Ovary (tissue), 10 donors: ENCODE measurements at regions of chr9 and their contacts with region 1.

Region 1: DNA sequence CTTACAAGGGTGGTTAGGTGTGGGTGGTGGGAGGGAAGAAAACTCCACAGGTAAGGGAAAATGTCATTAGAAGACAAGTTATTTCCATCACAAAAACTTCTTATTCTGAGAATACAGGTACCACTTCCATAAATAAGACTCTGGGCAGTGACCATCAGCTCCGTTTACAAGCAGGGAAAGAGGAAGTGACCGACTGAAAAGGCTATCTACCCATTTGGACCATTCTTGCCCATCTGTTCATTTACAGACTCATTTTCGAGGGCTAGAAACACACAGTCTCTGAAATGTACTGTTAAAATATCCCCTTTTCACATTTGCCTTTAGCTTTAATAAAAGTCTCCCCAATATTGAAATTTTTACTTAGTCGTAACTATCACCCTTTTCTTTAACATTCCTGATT is 79.5 kb downstream of the TTC39B start:
- DNase-seq: no peak
- H3K4me3 ChIP-seq: no peak overlapping the region
- H3K27ac ChIP-seq: no peak overlapping the region
- H3K4me1 ChIP-seq: peaks cover 1% of the 10 kb centered on the region
- H3K27me3 ChIP-seq: no peaks in the 10 kb centered on the region
- CTCF ChIP-seq: no peak
- EP300 ChIP-seq: no peak
- POLR2A ChIP-seq: no peak

Region 2: DNA sequence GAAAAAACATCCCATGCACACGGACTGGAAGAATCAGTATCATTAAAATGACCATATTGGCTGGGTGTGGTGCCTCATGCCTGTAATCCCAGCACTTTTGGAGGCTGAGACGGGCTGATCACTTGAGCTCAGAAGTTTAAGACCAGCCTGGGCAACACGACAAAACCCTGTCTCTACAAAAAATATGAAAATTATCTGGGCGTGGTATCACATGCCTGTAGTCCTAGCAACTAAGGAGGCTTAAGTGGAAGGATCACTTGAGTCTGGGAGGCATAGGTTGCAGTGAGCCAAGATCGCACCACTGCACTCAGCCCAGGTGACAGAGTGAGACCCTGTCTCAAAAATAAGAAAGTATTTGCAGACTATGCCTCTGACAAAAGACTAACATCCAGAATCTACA is 11.2 kb after region 1 on chr9:
- intact Hi-C with region 1: loop called in 1 of 4 experiments (anchors 1 kb)
- DNase-seq: no peak
- H3K4me3 ChIP-seq: no peak overlapping the region
- H3K27ac ChIP-seq: no peak overlapping the region
- H3K4me1 ChIP-seq: peaks cover 7% of the 10 kb centered on the region
- H3K27me3 ChIP-seq: no peaks in the 10 kb centered on the region
- CTCF ChIP-seq: no peak
- EP300 ChIP-seq: no peak
- POLR2A ChIP-seq: no peak